ENCODE measurements at regions of chr5 and their contacts with region 1.

Region 1: GRCh38 chr5:138464008-138464387 is 1.3 kb upstream of the EGR1 start:
- DNase-seq: peak; percentile 96
- ATAC-seq: peak; percentile 53
- H3K4me3 ChIP-seq: peak overlapping the region; percentile 57 to 98 (median 67)
- H3K4me3 Mint-ChIP-seq: peak overlapping the region; percentile 94
- H3K27ac ChIP-seq: peak overlapping the region; percentile 89 to 98
- H3K27ac Mint-ChIP-seq: peak overlapping the region; percentile 81
- H3K4me1 ChIP-seq: peaks cover 27 to 43% of the 10 kb centered on the region in 2 donors
- H3K4me1 Mint-ChIP-seq: peaks cover 52% of the 10 kb centered on the region
- H3K27me3 ChIP-seq: no peaks in the 10 kb centered on the region
- H3K27me3 Mint-ChIP-seq: no peaks in the 10 kb centered on the region
- CTCF ChIP-seq: peak; percentile 93

Region 2: GRCh38 chr5:138331449-138332368 is 132.3 kb before region 1 on chr5 and contains the start of gene CDC25C:
- CTCF ChIA-PET with region 1: no interaction called
- POLR2A ChIA-PET with region 1: no interaction called
- intact Hi-C with region 1: loop called (anchors 1 kb)
- DNase-seq: peak; percentile 97
- ATAC-seq: peak; percentile 100
- H3K4me3 ChIP-seq: peak within 1 kb of the TSS; percentile 60 to 75 (median 72)
- H3K4me3 Mint-ChIP-seq: peak within 1 kb of the TSS; percentile 87
- H3K27ac ChIP-seq: peak within 1 kb of the TSS in 1 of 2 donors; percentile 23
- H3K27ac Mint-ChIP-seq: peak within 1 kb of the TSS; percentile 61
- H3K4me1 ChIP-seq: peaks cover 7 to 15% of the 10 kb centered on the region in 2 donors
- H3K4me1 Mint-ChIP-seq: peaks cover 14% of the 10 kb centered on the region
- H3K27me3 ChIP-seq: no peaks in the 10 kb centered on the region
- H3K27me3 Mint-ChIP-seq: no peaks in the 10 kb centered on the region
- CTCF ChIP-seq: no peak
- total RNA-seq, gene CDC25C: not detected in 2 replicates

Region 3: GRCh38 chr5:138438724-138439476 is 25.1 kb before region 1 on chr5 and contains the start of gene REEP2:
- CTCF ChIA-PET with region 1: interaction called, 9 read pairs
- POLR2A ChIA-PET with region 1: interaction called, 3 read pairs
- intact Hi-C with region 1: loop called (anchors 2 kb)
- DNase-seq: peak; percentile 78
- ATAC-seq: peak; percentile 86
- H3K4me3 ChIP-seq: peak within 1 kb of the TSS in 4 of 5 experiments; percentile 22 to 56 (median 47)
- H3K4me3 Mint-ChIP-seq: peak within 1 kb of the TSS; percentile 86
- H3K27ac ChIP-seq: no peak within 1 kb of the TSS
- H3K27ac Mint-ChIP-seq: peak within 1 kb of the TSS; percentile 8
- H3K4me1 ChIP-seq: peaks cover 11 to 13% of the 10 kb centered on the region in 2 donors
- H3K4me1 Mint-ChIP-seq: peaks cover 13% of the 10 kb centered on the region
- H3K27me3 ChIP-seq: peaks cover 0 to 11% (median 3%) of the 10 kb centered on the region in 4 experiments
- H3K27me3 Mint-ChIP-seq: peaks cover 4% of the 10 kb centered on the region
- CTCF ChIP-seq: no peak
- total RNA-seq, gene REEP2: 0.20 and 0.44 TPM in 2 replicates

Region 4: GRCh38 chr5:138491669-138492559 is 27.9 kb after region 1 on chr5:
- CTCF ChIA-PET with region 1: interaction called, 7 read pairs
- POLR2A ChIA-PET with region 1: interaction called, 5 read pairs
- intact Hi-C with region 1: loop called (anchors 1 kb)
- DNase-seq: peak; percentile 89
- ATAC-seq: peak; percentile 99
- H3K4me3 ChIP-seq: peak overlapping the region in 4 of 5 experiments; percentile 36 to 61 (median 56)
- H3K4me3 Mint-ChIP-seq: peak overlapping the region; percentile 93
- H3K27ac ChIP-seq: no peak overlapping the region
- H3K27ac Mint-ChIP-seq: peak overlapping the region; percentile 63
- H3K4me1 ChIP-seq: peaks cover 19% of the 10 kb centered on the region in 2 donors
- H3K4me1 Mint-ChIP-seq: peaks cover 6% of the 10 kb centered on the region
- H3K27me3 ChIP-seq: peaks cover 0 to 51% (median 29%) of the 10 kb centered on the region in 4 experiments
- H3K27me3 Mint-ChIP-seq: peaks cover 29% of the 10 kb centered on the region
- CTCF ChIP-seq: no peak

Region 5: DNA sequence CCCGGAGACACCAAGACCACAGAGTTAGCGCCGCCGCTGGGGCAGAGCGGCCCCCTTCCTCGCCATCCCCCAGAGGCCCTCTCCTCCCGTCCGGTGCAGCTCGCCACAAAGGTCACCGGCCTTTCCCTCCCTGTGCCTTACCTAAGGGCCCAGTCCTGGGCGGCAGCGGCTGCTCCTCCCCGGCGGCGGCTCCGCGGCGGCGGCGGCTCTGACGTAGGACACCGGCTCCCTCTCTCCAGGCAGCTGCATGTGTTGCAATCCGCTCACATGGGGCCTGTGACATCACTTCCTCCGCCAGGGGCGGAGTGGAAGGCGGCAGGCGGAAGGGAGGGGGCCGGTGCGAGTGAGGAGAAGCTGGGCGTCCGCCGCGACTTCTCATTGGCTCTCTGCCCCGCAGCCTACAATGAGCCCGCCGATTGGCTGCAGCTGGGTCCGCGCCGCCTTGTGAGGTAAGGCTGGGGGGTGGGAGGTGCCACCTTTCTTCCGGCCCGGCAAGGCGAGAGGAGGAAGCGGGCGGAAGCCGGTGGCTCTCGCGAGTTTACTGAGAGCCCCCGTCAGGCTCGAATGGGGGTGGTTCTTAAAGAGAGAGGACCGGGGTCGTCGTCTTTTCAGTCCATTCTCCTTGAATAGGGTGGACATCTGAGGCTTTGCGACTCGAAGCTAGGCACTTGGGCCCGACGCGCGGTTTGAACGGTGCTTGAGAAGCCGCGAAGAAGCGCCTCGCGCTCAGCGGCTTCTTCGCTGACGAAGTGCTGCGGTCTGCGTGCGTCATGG is 79.1 kb after region 1 on chr5 and contains the start of gene ETF1:
- CTCF ChIA-PET with region 1: interaction called, 3 read pairs
- POLR2A ChIA-PET with region 1: interaction called, 5 read pairs
- intact Hi-C with region 1: loop called (anchors 1 kb)
- DNase-seq: peak; percentile 100
- ATAC-seq: peak; percentile 91
- H3K4me3 ChIP-seq: peak within 1 kb of the TSS; percentile 92 to 99 (median 95)
- H3K4me3 Mint-ChIP-seq: peak within 1 kb of the TSS; percentile 94
- H3K27ac ChIP-seq: peak within 1 kb of the TSS; percentile 100
- H3K27ac Mint-ChIP-seq: peak within 1 kb of the TSS; percentile 100
- H3K4me1 ChIP-seq: peaks cover 33 to 46% of the 10 kb centered on the region in 2 donors
- H3K4me1 Mint-ChIP-seq: peaks cover 74% of the 10 kb centered on the region
- H3K27me3 ChIP-seq: no peaks in the 10 kb centered on the region
- H3K27me3 Mint-ChIP-seq: no peaks in the 10 kb centered on the region
- CTCF ChIP-seq: no peak
- total RNA-seq, gene ETF1: 50.5 and 50.8 TPM in 2 replicates

Region 6: DNA sequence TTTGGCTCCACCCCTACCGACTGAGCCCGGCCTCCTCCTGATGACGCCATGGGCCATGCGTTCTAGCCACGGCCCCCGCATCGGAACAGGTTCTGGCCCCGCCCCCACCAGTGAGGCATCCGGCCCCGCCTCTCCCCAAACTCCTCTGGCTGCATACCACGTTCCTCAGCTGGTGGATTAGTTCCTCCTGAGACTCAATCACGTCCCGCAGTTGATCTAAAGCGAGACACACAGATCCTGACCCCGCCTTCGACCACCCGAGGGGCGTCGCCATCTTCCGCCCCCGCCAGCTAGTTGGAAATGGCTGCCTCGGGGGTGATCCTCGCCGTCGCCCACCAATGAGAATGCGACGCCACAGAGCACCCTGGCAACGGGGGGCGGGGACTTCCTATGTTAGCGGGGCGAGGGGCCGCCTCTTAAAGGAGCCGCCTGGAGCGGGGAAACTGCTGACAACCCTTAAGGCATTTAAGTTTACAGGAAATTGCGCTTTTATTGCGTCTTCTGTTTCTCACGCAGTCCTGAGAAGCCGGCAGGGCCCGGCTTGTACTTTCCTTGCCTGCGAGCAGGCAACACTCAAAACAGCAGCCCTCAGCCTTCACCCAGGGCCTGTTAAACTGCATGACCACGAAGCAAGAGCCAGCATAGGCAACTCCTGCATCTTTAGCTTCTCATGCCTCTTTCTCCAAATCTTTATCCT is 939.9 kb after region 1 on chr5 and contains the start of gene SPATA24:
- CTCF ChIA-PET with region 1: no interaction called
- POLR2A ChIA-PET with region 1: no interaction called
- intact Hi-C with region 1: loop called (anchors 10 kb)
- DNase-seq: peak; percentile 99
- ATAC-seq: peak; percentile 85
- H3K4me3 ChIP-seq: peak within 1 kb of the TSS; percentile 50 to 73 (median 68)
- H3K4me3 Mint-ChIP-seq: peak within 1 kb of the TSS; percentile 95
- H3K27ac ChIP-seq: peak within 1 kb of the TSS; percentile 85 to 86
- H3K27ac Mint-ChIP-seq: peak within 1 kb of the TSS; percentile 97
- H3K4me1 ChIP-seq: peaks cover 33 to 43% of the 10 kb centered on the region in 2 donors
- H3K4me1 Mint-ChIP-seq: peaks cover 43% of the 10 kb centered on the region
- H3K27me3 ChIP-seq: no peaks in the 10 kb centered on the region
- H3K27me3 Mint-ChIP-seq: no peaks in the 10 kb centered on the region
- CTCF ChIP-seq: no peak
- total RNA-seq, gene SPATA24: 6.4 and 8.2 TPM in 2 replicates

Measured in B cell (primary cell).